Gastrocnemius medialis (tissue), 4 donors: ENCODE measurements at regions of chr13 and their contacts with region 1.

Region 1: DNA sequence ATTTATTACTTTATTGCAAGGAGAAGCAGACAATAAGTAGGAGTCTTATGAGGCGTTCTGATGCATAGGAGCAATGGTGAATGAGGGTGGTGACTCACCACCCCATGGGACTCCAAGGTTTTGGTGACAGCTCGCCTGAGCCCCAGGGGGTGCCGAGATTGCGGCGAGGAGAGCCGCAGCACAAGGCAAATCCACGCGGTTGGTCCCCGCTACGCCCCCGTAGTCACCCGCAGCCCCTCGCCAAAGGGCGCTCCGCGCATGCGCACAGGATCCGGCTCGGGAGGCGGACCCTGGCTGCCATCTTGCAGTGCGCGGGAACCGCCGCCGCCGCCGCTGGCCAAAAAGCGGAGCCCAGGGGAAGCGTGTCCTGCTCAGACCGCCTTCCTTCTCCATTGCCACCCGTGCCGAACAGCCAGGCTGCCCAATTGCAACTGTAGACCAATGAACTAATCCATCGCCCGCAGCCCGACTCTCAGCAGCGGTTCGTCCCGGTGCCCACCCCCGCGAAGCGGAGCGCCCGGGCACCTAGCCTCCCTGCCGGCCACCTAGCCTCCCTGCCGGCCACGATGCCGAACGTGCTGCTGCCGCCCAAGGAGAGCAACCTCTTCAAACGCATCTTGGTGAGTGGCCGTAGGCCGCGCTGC is at the start of gene NAA16:
- DNase-seq: peak; percentile 79 to 90
- ATAC-seq: peak; percentile 86 to 88
- H3K4me3 ChIP-seq: peak within 1 kb of the TSS; percentile 85 to 94 (median 90)
- H3K27ac ChIP-seq: peak within 1 kb of the TSS; percentile 93 to 96 (median 95)
- H3K4me1 ChIP-seq: peaks cover 26 to 34% of the 10 kb centered on the region in 2 donors
- H3K27me3 ChIP-seq: no peaks in the 10 kb centered on the region
- CTCF ChIP-seq: peak in 2 of 5 experiments; percentile 23 to 40
- POLR2A ChIP-seq: peak; percentile 89 to 90
- total RNA-seq, gene NAA16: 8.2 to 30.5 (median 11.6) TPM

Region 2: DNA sequence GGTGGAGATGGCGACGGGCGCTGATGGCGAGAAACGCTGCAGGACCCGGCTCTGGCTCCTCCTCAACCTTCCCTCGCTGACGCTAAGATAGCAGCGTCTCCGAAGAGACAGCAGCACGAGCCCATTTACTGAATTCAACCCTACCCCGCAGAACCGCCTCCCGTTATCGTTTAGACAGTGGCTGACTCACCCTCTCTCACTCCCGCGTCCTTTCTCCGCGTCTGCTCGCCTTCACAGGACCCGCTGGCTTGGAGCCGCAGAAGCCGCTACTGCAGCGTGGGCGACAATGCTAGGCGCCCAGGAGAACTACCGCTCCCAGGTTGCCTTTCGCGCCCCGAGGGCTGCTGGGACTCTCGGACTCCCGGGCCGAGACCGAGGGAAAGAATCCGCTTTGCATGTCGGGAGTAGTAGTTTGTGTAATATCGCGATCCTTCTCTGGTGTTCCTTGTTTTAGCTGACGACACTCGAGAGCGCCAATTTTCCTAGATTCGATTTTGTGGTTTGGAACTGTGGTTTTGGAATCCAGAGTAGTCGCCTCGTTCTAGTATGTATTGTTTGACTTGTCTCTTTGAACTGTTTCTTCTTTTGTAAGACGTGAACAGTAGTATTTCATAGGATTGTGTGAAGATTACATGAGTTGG is 178.5 kb before region 1 on chr13 and contains the start of gene KBTBD6:
- in situ Hi-C with region 1: no loop called
- intact Hi-C with region 1: loop called (anchors 5 kb)
- DNase-seq: peak; percentile 95 to 96
- ATAC-seq: peak; percentile 97
- H3K4me3 ChIP-seq: peak within 1 kb of the TSS; percentile 81 to 88 (median 83)
- H3K27ac ChIP-seq: peak within 1 kb of the TSS; percentile 92 to 94 (median 94)
- H3K4me1 ChIP-seq: peaks cover 47 to 50% of the 10 kb centered on the region in 2 donors
- H3K27me3 ChIP-seq: no peaks in the 10 kb centered on the region
- CTCF ChIP-seq: no peak
- POLR2A ChIP-seq: peak; percentile 65 to 72
- total RNA-seq, gene KBTBD6: 3.7 to 6.1 (median 5.3) TPM

Region 3: GRCh38 chr13:41193919-41194824 is 116.9 kb before region 1 on chr13 and contains the start of gene KBTBD7:
- in situ Hi-C with region 1: no loop called
- intact Hi-C with region 1: loop called (anchors 5 kb)
- DNase-seq: peak; percentile 90 to 93
- ATAC-seq: peak; percentile 96 to 97
- H3K4me3 ChIP-seq: peak within 1 kb of the TSS; percentile 82 to 90 (median 87)
- H3K27ac ChIP-seq: peak within 1 kb of the TSS; percentile 89 to 94 (median 92)
- H3K4me1 ChIP-seq: peaks cover 26 to 31% of the 10 kb centered on the region in 2 donors
- H3K27me3 ChIP-seq: no peaks in the 10 kb centered on the region
- CTCF ChIP-seq: peak in 1 of 5 experiments; percentile 29
- POLR2A ChIP-seq: peak; percentile 56 to 79
- total RNA-seq, gene KBTBD7: 2.3 to 5.6 (median 5.3) TPM

Region 4: DNA sequence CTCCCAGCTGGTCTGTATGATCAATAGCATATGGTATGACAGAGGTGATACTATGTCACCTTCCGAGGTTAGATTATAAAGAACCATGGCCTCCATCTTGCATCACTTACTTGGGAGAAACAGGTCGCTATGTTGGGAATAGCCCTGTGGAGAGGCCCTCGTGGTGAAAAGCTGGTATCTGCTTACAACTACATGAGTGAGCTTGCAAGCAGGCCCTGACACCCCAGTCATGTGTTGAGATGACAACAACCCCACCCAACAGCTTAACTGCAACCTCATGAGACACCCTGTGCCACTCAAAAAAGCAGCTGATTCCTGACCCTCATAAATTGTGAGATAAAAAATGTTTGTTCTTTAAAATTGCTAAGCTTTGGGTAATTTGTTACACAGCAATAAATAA is 66.5 kb before region 1 on chr13:
- in situ Hi-C with region 1: no loop called
- intact Hi-C with region 1: loop called (anchors 2 kb)
- DNase-seq: peak; percentile 79 to 91
- ATAC-seq: peak; percentile 81 to 89
- H3K4me3 ChIP-seq: no peak overlapping the region
- H3K27ac ChIP-seq: peak overlapping the region; percentile 77 to 82 (median 79)
- H3K4me1 ChIP-seq: peaks cover 44 to 58% of the 10 kb centered on the region in 2 donors
- H3K27me3 ChIP-seq: no peaks in the 10 kb centered on the region
- CTCF ChIP-seq: no peak
- POLR2A ChIP-seq: no peak

Region 5: DNA sequence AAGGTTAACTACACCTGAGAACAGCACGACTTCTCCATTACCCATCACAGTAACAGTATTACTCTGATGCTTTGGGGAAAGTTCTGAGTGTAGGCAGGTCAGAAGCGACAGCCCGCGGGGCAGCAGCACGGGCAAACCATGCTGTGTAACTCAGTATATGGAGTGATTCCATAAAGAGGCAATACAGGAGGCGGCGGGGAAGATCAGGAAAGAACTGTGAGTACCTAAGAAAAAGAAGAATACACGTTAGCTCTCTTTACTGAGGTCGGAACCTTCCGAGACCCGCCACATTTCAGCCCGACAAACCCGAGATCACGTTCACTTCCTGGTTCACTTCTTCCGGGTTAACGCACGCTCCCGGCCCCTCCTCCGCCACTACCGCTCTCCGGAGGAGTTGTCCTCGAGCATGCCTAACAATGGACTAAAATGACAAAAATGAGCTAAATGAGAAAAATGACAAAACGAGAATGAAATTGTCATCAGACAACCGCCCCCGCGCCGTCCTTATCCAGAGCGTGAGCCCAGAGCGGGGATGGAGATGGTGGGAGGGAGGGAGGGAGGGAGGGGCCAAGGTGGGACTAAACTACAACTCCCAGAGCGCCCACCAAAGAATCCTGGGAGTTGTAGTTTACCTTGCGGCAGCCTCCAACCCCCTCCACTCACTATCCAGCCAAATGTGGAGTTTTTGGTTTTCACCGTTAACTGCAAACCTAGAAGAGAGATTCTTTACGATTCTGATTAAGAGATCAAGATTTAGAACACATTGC is 47.6 kb before region 1 on chr13 and contains the start of gene MTRF1:
- in situ Hi-C with region 1: no loop called
- intact Hi-C with region 1: loop called (anchors 1 kb)
- DNase-seq: peak; percentile 68 to 70
- ATAC-seq: peak; percentile 98 to 99
- H3K4me3 ChIP-seq: peak within 1 kb of the TSS; percentile 77 to 87 (median 82)
- H3K27ac ChIP-seq: peak within 1 kb of the TSS; percentile 83 to 91 (median 90)
- H3K4me1 ChIP-seq: peaks cover 8% of the 10 kb centered on the region in 2 donors
- H3K27me3 ChIP-seq: no peaks in the 10 kb centered on the region
- CTCF ChIP-seq: no peak
- POLR2A ChIP-seq: peak in 1 of 2 donors; percentile 42
- total RNA-seq, gene MTRF1: 8.2 to 16.7 (median 13.3) TPM

Region 6: GRCh38 chr13:41588899-41589298 is 277.8 kb after region 1 on chr13:
- in situ Hi-C with region 1: no loop called
- intact Hi-C with region 1: no loop called
- DNase-seq: no peak
- ATAC-seq: no peak
- H3K4me3 ChIP-seq: no peak overlapping the region
- H3K27ac ChIP-seq: peak overlapping the region in 2 of 4 donors; percentile 3 to 16
- H3K4me1 ChIP-seq: peaks cover 0 to 7% of the 10 kb centered on the region in 2 donors
- H3K27me3 ChIP-seq: no peaks in the 10 kb centered on the region
- CTCF ChIP-seq: no peak
- POLR2A ChIP-seq: no peak

Region 7: DNA sequence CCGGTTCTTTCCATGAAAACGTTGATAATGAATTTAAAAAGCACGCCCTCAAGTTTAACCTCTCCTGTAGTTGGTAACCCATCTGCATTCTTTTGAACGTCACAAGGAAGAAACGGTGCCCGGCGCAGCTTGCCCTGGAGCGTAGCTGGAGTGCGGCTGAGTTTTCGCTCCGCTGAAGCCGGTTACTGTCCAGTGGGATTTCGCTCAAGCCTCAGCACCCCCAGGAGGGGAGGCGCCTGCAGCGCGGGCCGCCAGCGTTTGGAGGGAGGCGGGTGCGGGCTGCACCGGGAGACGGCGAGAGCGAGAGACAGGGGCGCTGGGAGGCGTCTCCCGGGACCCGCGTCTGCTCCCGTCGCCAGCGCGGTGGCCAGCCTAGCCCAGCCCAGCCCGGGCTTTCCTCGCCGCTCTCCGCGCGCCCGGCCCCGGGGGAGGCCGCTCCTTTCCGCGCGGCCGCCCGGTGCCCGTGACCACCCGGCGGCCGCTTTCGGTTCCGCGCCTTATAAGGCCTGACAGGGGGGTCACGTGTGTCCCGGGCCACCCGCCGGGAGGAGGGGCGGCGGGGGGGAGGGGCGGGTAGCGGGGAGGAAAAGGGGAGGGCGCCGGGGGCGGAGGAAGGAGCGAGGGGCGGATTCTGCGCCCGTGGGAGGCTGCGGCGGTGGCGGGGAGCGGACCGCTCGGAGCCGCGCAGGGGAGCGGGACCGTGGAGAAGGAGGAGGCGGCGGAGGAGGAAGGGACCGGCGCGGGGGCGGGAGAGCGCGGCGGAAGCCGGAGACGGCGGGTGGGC is 729.1 kb after region 1 on chr13:
- in situ Hi-C with region 1: no loop called
- intact Hi-C with region 1: loop called (anchors 10 kb)
- DNase-seq: peak; percentile 89
- ATAC-seq: peak; percentile 84 to 86
- H3K4me3 ChIP-seq: peak overlapping the region; percentile 72 to 95 (median 80)
- H3K27ac ChIP-seq: peak overlapping the region; percentile 88 to 98 (median 92)
- H3K4me1 ChIP-seq: peaks cover 0 to 10% of the 10 kb centered on the region in 2 donors
- H3K27me3 ChIP-seq: no peaks in the 10 kb centered on the region
- CTCF ChIP-seq: peak in 1 of 5 experiments; percentile 18
- POLR2A ChIP-seq: peak; percentile 90 to 96